ENCODE measurements at regions of chr19 and their contacts with region 1.

Region 1: GRCh38 chr19:44808463-44809371 is at the start of gene BCAM:
- DNase-seq: peak; percentile 90
- ATAC-seq: peak; percentile 90
- total RNA-seq, gene BCAM: 91.9 TPM

Region 2: GRCh38 chr19:44823373-44823698 is 14.6 kb after region 1 on chr19:
- intact Hi-C with region 1: loop called (anchors 2 kb)
- DNase-seq: no peak
- ATAC-seq: no peak